ENCODE measurements at regions of chr16 and their contacts with region 1.

Region 1: GRCh38 chr16:87822108-87822970 is 47.0 kb downstream of the SLC7A5 start:
- DNase-seq: no peak
- ATAC-seq: no peak
- H3K4me3 Mint-ChIP-seq: no peak overlapping the region
- H3K27ac Mint-ChIP-seq: no peak overlapping the region
- H3K4me1 Mint-ChIP-seq: peaks cover 7% of the 10 kb centered on the region
- H3K27me3 Mint-ChIP-seq: no peaks in the 10 kb centered on the region

Region 2: GRCh38 chr16:87806603-87807546 is 15.5 kb before region 1 on chr16:
- CTCF ChIA-PET with region 1: interaction called, 5 read pairs
- POLR2A ChIA-PET with region 1: interaction called, 12 read pairs
- intact Hi-C with region 1: no loop called
- DNase-seq: peak; percentile 85
- ATAC-seq: peak; percentile 88
- H3K4me3 Mint-ChIP-seq: peak overlapping the region; percentile 80
- H3K27ac Mint-ChIP-seq: peak overlapping the region; percentile 98
- H3K4me1 Mint-ChIP-seq: peaks cover 29% of the 10 kb centered on the region
- H3K27me3 Mint-ChIP-seq: no peaks in the 10 kb centered on the region

Region 3: GRCh38 chr16:88063211-88063773 is 241.0 kb after region 1 on chr16:
- CTCF ChIA-PET with region 1: no interaction called
- POLR2A ChIA-PET with region 1: no interaction called
- intact Hi-C with region 1: no loop called
- DNase-seq: no peak
- ATAC-seq: no peak
- H3K4me3 Mint-ChIP-seq: no peak overlapping the region
- H3K27ac Mint-ChIP-seq: peak overlapping the region; percentile 8
- H3K4me1 Mint-ChIP-seq: no peaks in the 10 kb centered on the region
- H3K27me3 Mint-ChIP-seq: no peaks in the 10 kb centered on the region